Heart right ventricle (tissue), 16 donors: ENCODE measurements at regions of chr18 and their contacts with region 1.

Region 1: GRCh38 chr18:31294199-31294752 is 23.7 kb upstream of the DSG1 start:
- DNase-seq: no peak
- ATAC-seq: no peak
- H3K4me3 ChIP-seq: no peak overlapping the region
- H3K27ac ChIP-seq: no peak overlapping the region
- H3K4me1 ChIP-seq: no peaks in the 10 kb centered on the region
- H3K27me3 ChIP-seq: no peaks in the 10 kb centered on the region
- CTCF ChIP-seq: no peak

Region 2: GRCh38 chr18:31386741-31387140 is 92.5 kb after region 1 on chr18:
- intact Hi-C with region 1: loop called in 1 of 10 experiments (anchors 10 kb)
- DNase-seq: no peak
- ATAC-seq: no peak
- H3K4me3 ChIP-seq: no peak overlapping the region
- H3K27ac ChIP-seq: no peak overlapping the region
- H3K4me1 ChIP-seq: no peaks in the 10 kb centered on the region
- H3K27me3 ChIP-seq: no peaks in the 10 kb centered on the region
- CTCF ChIP-seq: no peak